ENCODE measurements at regions of chr3 and their contacts with region 1.

Region 1: GRCh38 chr3:47617086-47618010 is 38.7 kb upstream of the CSPG5 start:
- DNase-seq: peak; percentile 83
- ATAC-seq: peak; percentile 71
- H3K4me3 ChIP-seq: peak overlapping the region; percentile 29; the same call in 1 of the 2 replicates
- H3K27ac ChIP-seq: peak overlapping the region; percentile 92
- H3K4me1 ChIP-seq: peaks cover 38% of the 10 kb centered on the region
- H3K27me3 ChIP-seq: no peaks in the 10 kb centered on the region
- CTCF ChIP-seq: no peak

Region 2: GRCh38 chr3:47605652-47606051 is 11.7 kb before region 1 on chr3:
- CTCF ChIA-PET with region 1: interaction called, 3 read pairs
- POLR2A ChIA-PET with region 1: interaction called, 7 read pairs
- intact Hi-C with region 1: loop called (anchors 1 kb)
- DNase-seq: peak; percentile 49
- ATAC-seq: peak; percentile 40
- H3K4me3 ChIP-seq: no peak overlapping the region
- H3K27ac ChIP-seq: no peak overlapping the region
- H3K4me1 ChIP-seq: peaks cover 5% of the 10 kb centered on the region; the same call in 1 of the 2 replicates
- H3K27me3 ChIP-seq: no peaks in the 10 kb centered on the region
- CTCF ChIP-seq: no peak